Breast epithelium (tissue), 4 donors: ENCODE measurements at regions of chr2 and their contacts with region 1.

Region 1: GRCh38 chr2:76613330-76613729 is 902.6 kb upstream of the GCFC2 start:
- DNase-seq: no peak
- H3K4me3 ChIP-seq: no peak overlapping the region
- H3K27ac ChIP-seq: no peak overlapping the region
- H3K4me1 ChIP-seq: no peaks in the 10 kb centered on the region
- H3K27me3 ChIP-seq: no peaks in the 10 kb centered on the region
- CTCF ChIP-seq: no peak
- POLR2A ChIP-seq: no peak

Region 2: GRCh38 chr2:76667821-76668271 is 54.5 kb after region 1 on chr2:
- intact Hi-C with region 1: loop called (anchors 2 kb)
- DNase-seq: no peak
- H3K4me3 ChIP-seq: no peak overlapping the region
- H3K27ac ChIP-seq: no peak overlapping the region
- H3K4me1 ChIP-seq: no peaks in the 10 kb centered on the region
- H3K27me3 ChIP-seq: no peaks in the 10 kb centered on the region
- CTCF ChIP-seq: no peak
- POLR2A ChIP-seq: no peak

Region 3: DNA sequence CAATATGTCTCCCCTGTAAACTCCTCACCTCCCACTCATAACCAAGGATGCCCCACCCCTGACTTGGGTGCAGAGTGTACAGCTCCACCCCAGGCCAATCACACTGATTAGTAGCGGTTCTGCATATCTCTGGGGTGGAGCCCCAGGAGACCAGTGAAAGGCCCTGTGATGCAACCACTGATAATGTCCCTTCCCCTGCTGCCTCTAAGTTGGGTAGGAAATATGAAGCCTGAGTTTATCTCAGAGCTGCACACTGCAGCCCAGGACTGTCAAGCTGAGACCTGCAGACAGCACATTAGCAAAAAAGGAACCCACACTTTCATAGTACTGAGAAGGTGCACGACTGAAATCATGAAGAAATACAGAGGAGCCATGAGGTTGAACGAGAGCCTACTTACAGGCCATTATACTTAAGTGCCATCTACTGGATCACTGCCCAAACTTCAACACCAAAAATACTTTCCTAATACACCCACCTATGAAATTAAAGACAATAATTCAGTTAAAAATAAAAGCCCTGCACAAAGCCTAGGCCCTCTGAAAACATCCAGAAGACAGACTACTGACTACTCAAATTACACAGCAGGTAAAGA is 1364.2 kb after region 1 on chr2:
- intact Hi-C with region 1: no loop called
- DNase-seq: no peak
- H3K4me3 ChIP-seq: no peak overlapping the region
- H3K27ac ChIP-seq: no peak overlapping the region
- H3K4me1 ChIP-seq: no peaks in the 10 kb centered on the region
- H3K27me3 ChIP-seq: no peaks in the 10 kb centered on the region
- CTCF ChIP-seq: no peak
- POLR2A ChIP-seq: no peak